ENCODE measurements at regions of chr12 and their contacts with region 1.

Region 1: DNA sequence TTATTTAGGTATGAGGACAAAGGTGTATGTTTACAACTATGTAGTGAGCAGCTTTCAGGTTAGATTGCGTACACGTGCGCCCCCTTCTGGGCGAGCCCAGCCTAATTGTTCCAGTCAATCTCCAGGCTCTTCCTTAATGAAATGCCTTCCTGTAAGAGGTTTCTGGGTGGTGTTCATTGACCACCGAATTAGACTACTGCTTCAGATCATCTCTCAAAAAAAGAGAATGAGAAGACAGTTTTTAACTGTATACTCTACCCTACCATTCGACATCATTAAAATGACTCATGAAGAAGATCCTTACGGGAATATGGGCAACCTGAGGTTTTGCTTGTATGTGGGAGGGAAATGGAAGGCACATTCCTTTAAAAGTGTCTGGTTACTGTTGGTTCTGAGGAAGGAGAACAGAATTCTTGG is 2.1 kb downstream of the LUM start:
- DNase-seq: peak in 1 of 2 experiments; percentile 59
- H3K4me3 ChIP-seq: no peak overlapping the region
- H3K27ac ChIP-seq: no peak overlapping the region
- H3K4me1 ChIP-seq: no peaks in the 10 kb centered on the region
- H3K27me3 ChIP-seq: no peaks in the 10 kb centered on the region
- CTCF ChIP-seq: peak; percentile 85

Region 2: GRCh38 chr12:90854136-90854689 is 254.9 kb before region 1 on chr12:
- CTCF ChIA-PET with region 1: no interaction called
- POLR2A ChIA-PET with region 1: no interaction called
- intact Hi-C with region 1: no loop called
- DNase-seq: no peak
- H3K4me3 ChIP-seq: no peak overlapping the region
- H3K27ac ChIP-seq: no peak overlapping the region
- H3K4me1 ChIP-seq: no peaks in the 10 kb centered on the region
- H3K27me3 ChIP-seq: no peaks in the 10 kb centered on the region
- CTCF ChIP-seq: peak; percentile 84

Region 3: DNA sequence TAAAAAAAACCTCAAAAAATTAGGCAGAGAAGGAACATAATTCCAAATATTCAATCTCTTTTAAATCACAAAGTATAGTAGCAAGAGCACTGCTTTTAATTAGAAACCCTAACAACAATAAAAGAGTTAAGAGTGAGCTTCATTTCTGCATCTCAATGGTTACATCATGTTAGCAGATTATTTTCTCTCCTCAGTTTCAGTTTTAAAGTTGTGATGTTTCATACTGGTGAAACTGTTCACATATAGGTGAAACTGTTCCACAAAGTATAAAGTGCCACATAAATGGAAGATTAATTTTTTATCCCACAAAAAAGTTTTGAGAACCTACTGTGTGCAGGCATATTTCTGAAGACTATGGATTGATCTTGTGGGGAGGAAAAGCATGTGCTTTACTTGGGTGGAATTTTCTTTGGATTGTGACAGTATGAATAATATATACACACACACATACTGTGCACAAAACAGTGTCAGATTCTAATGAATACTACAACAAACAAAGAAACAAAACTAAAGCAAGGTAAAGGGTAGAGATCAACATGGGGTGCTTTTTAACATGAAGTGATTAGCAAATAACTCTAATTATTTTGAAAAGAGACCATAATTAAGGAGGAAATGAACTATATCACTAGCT is 15.0 kb before region 1 on chr12:
- CTCF ChIA-PET with region 1: no interaction called
- POLR2A ChIA-PET with region 1: no interaction called
- intact Hi-C with region 1: no loop called
- DNase-seq: no peak
- H3K4me3 ChIP-seq: no peak overlapping the region
- H3K27ac ChIP-seq: peak overlapping the region; percentile 17
- H3K4me1 ChIP-seq: peaks cover 11% of the 10 kb centered on the region
- H3K27me3 ChIP-seq: no peaks in the 10 kb centered on the region
- CTCF ChIP-seq: no peak

Region 4: GRCh38 chr12:91326058-91327027 is 217.2 kb after region 1 on chr12:
- CTCF ChIA-PET with region 1: no interaction called
- POLR2A ChIA-PET with region 1: no interaction called
- intact Hi-C with region 1: loop called (anchors 10 kb)
- DNase-seq: peak in 1 of 2 experiments; percentile 20
- H3K4me3 ChIP-seq: no peak overlapping the region
- H3K27ac ChIP-seq: no peak overlapping the region
- H3K4me1 ChIP-seq: no peaks in the 10 kb centered on the region
- H3K27me3 ChIP-seq: no peaks in the 10 kb centered on the region
- CTCF ChIP-seq: peak; percentile 87

Measured in PC-9 (cell line).